Activated CD8-positive, alpha-beta memory T cell treated with anti-CD3 and anti-CD28 coated beads, Interleukin-2, amount 10 ng/mL, durations not matched to agents 7 days and 5 days (primary cell): ENCODE measurements at regions of chr22 and their contacts with region 1.

Region 1: DNA sequence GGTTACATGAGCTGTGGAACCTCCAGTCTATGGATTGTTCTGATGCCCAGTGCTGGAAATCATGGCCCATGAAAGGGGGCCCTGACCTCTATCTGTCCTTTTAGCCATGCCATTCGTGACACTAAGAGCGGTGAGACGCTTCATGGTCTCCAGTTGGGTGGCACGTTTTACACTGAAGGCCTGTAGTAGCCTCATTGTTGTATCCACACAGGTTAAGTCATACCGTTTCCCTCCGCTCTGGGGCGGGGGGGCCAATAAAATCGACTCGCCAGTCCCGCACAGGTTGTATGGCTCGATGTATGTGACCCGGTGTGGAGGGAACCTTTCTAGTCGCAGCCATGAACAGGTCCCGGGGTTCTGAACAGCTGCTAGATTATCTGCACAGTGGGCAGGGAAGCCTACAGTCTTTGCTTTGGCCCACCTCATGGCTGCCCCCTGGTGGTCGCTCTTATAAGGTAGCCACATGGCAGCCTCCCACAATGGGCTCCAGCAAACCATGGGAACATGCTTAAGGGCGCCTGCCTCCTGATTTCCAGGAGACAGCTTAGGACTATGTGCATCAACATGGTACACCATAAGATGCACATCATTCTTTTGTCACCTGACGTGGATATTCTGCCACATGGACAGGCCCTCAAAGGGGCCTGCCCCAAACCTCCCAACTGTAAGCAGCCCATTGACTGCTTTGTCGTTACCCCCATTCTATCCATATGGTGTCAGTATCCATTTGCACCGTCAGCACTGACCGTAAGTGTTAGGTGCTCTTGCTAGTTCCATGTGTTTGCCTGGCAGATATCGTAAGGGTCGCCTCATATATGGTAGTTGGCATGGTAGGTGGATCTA is 19.7 kb upstream of the APOL3 start:
- DNase-seq: peak; percentile 89
- ATAC-seq: peak; percentile 98
- H3K4me3 Mint-ChIP-seq: no peak overlapping the region
- H3K27ac Mint-ChIP-seq: no peak overlapping the region
- H3K4me1 Mint-ChIP-seq: peaks cover 3% of the 10 kb centered on the region
- H3K27me3 Mint-ChIP-seq: peaks cover 2% of the 10 kb centered on the region

Region 2: GRCh38 chr22:36117053-36117554 is 63.2 kb before region 1 on chr22:
- CTCF ChIA-PET with region 1: no interaction called
- DNase-seq: no peak
- ATAC-seq: no peak
- H3K4me3 Mint-ChIP-seq: no peak overlapping the region
- H3K27ac Mint-ChIP-seq: no peak overlapping the region
- H3K4me1 Mint-ChIP-seq: no peaks in the 10 kb centered on the region
- H3K27me3 Mint-ChIP-seq: no peaks in the 10 kb centered on the region

Region 3: GRCh38 chr22:36144886-36145541 is 35.2 kb before region 1 on chr22:
- CTCF ChIA-PET with region 1: interaction called, 100 read pairs
- DNase-seq: peak; percentile 65
- ATAC-seq: peak; percentile 68
- H3K4me3 Mint-ChIP-seq: no peak overlapping the region
- H3K27ac Mint-ChIP-seq: no peak overlapping the region
- H3K4me1 Mint-ChIP-seq: peaks cover 14% of the 10 kb centered on the region
- H3K27me3 Mint-ChIP-seq: no peaks in the 10 kb centered on the region

Region 4: DNA sequence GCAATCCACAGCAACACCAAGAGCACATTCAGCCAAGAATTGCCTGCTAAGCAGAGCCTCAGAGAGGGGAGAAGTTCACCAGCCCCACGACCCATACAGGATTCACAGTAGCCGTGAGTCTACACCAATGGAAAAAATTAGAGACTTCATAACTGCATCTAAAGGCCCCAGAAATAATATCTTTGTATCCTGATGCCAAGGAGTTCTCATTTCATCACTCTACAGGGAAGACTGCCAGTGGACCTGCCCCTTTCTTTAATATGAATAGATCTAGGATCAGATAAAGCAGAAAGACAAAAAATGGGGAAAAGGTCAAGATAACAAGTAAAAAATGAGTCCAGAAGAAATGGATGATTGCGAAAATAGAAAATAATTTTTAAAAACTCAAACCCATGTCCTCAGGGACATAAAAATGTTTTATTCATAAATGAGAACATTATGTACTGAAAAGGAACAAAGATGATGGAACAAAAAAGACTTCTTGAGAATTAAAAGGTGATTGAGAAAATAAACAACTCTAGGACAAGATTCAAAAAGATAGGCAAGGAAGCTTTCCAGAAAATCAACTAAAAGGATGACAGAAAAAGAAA is 29.2 kb before region 1 on chr22:
- CTCF ChIA-PET with region 1: interaction called, 146 read pairs
- DNase-seq: no peak
- ATAC-seq: no peak
- H3K4me3 Mint-ChIP-seq: no peak overlapping the region
- H3K27ac Mint-ChIP-seq: peak overlapping the region; percentile 41
- H3K4me1 Mint-ChIP-seq: peaks cover 59% of the 10 kb centered on the region
- H3K27me3 Mint-ChIP-seq: no peaks in the 10 kb centered on the region

Region 5: GRCh38 chr22:36156515-36157419 is 23.5 kb before region 1 on chr22:
- CTCF ChIA-PET with region 1: interaction called, 146 read pairs
- DNase-seq: peak; percentile 77
- ATAC-seq: peak; percentile 52
- H3K4me3 Mint-ChIP-seq: peak overlapping the region; percentile 98
- H3K27ac Mint-ChIP-seq: peak overlapping the region; percentile 93
- H3K4me1 Mint-ChIP-seq: peaks cover 83% of the 10 kb centered on the region
- H3K27me3 Mint-ChIP-seq: no peaks in the 10 kb centered on the region

Region 6: GRCh38 chr22:36245805-36246356 is 65.6 kb after region 1 on chr22:
- CTCF ChIA-PET with region 1: no interaction called
- DNase-seq: no peak
- ATAC-seq: no peak
- H3K4me3 Mint-ChIP-seq: no peak overlapping the region
- H3K27ac Mint-ChIP-seq: no peak overlapping the region
- H3K4me1 Mint-ChIP-seq: no peaks in the 10 kb centered on the region
- H3K27me3 Mint-ChIP-seq: no peaks in the 10 kb centered on the region